CD4-positive, alpha-beta T cell (primary cell): ENCODE measurements at regions of chr6 and their contacts with region 1.

Region 1: DNA sequence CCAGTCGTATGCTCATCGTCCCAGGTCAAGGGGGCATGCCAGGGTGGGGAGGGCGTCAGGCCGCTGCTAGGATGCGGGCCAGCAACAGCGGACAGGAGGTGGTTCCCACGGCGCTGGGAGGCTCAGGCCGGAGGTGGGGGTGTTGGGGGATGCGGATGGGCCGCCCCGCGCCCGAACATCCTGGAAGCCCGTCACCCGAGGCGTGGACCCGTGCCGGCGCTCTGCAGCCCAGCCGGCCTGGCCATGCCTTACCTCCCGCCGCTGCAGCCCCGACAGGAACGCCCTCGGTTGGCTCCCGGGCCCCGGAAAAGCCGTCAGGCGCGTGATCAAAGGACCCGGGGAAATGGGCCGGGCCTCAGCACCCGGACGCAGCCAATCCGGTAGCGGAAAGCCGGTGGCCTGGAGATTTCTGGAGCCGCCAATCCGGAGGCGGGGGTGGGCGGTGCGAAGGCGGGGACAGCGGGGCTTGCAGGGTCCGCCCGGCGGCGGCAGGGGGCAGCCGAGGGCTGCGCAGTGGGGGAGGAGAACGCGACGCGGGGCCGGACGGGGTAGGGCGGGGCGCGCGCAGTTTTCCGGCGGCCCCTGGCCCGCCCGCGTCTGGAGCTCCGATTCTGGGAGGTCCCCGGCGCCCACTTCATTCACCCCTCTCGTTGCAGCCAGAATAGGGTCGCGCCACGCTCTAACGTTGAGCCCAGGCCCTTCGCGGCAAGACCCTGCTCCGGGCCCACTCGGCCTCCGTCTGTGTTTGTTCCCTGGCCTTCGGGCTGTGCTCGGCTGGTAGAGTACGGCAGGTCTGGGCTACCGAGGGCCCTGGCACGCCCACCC is at the start of gene SMIM29:
- DNase-seq: peak; percentile 94 to 99 (median 97)
- ATAC-seq: peak; percentile 90
- H3K4me3 ChIP-seq: peak within 1 kb of the TSS; percentile 96
- H3K4me3 Mint-ChIP-seq: peak within 1 kb of the TSS; percentile 97
- H3K27ac ChIP-seq: peak within 1 kb of the TSS; percentile 89 to 96
- H3K27ac Mint-ChIP-seq: peak within 1 kb of the TSS; percentile 91
- H3K4me1 ChIP-seq: peaks cover 44% of the 10 kb centered on the region
- H3K4me1 Mint-ChIP-seq: peaks cover 28% of the 10 kb centered on the region
- H3K27me3 ChIP-seq: no peaks in the 10 kb centered on the region
- H3K27me3 Mint-ChIP-seq: no peaks in the 10 kb centered on the region
- CTCF ChIP-seq: peak; percentile 89
- total RNA-seq, gene SMIM29: 22.0 to 23.9 TPM

Region 2: DNA sequence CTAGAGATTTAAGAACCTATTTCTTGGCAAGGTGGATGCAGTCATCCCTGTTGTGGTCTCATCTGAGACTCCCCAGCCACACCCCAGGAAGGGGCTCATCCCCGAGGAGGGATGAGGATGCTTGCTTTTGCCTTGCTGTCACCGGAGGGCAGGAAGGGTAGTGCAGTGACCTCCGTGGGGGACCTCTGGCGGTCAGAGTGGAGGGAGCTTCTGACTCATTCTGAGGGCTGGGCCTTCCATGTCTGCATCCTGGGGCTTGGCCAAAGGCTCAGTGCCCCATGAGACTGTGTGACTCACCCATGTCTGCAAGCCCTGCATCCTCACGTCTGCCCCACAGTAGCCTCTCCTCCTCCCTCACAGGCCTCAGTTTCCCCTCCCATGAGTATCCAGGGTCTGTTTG is 576.1 kb before region 1 on chr6:
- CTCF ChIA-PET with region 1: no interaction called
- POLR2A ChIA-PET with region 1: no interaction called
- intact Hi-C with region 1: no loop called
- DNase-seq: no peak
- ATAC-seq: no peak
- H3K4me3 ChIP-seq: no peak overlapping the region
- H3K4me3 Mint-ChIP-seq: no peak overlapping the region
- H3K27ac ChIP-seq: no peak overlapping the region
- H3K27ac Mint-ChIP-seq: no peak overlapping the region
- H3K4me1 ChIP-seq: peaks cover 19% of the 10 kb centered on the region
- H3K4me1 Mint-ChIP-seq: peaks cover 14% of the 10 kb centered on the region
- H3K27me3 ChIP-seq: no peaks in the 10 kb centered on the region
- H3K27me3 Mint-ChIP-seq: no peaks in the 10 kb centered on the region
- CTCF ChIP-seq: no peak

Region 3: GRCh38 chr6:33788694-33789549 is 460.0 kb before region 1 on chr6 and contains the start of gene LEMD2:
- CTCF ChIA-PET with region 1: no interaction called
- POLR2A ChIA-PET with region 1: interaction called, 4 read pairs
- intact Hi-C with region 1: loop called in 1 of 2 experiments (anchors 5 kb)
- DNase-seq: peak; percentile 81 to 96 (median 92)
- ATAC-seq: peak; percentile 88
- H3K4me3 ChIP-seq: peak within 1 kb of the TSS; percentile 53
- H3K4me3 Mint-ChIP-seq: peak within 1 kb of the TSS; percentile 94
- H3K27ac ChIP-seq: peak within 1 kb of the TSS; percentile 50 to 87
- H3K27ac Mint-ChIP-seq: peak within 1 kb of the TSS; percentile 94
- H3K4me1 ChIP-seq: peaks cover 45% of the 10 kb centered on the region
- H3K4me1 Mint-ChIP-seq: peaks cover 47% of the 10 kb centered on the region
- H3K27me3 ChIP-seq: no peaks in the 10 kb centered on the region
- H3K27me3 Mint-ChIP-seq: no peaks in the 10 kb centered on the region
- CTCF ChIP-seq: no peak
- total RNA-seq, gene LEMD2: 122 to 124 TPM

Region 4: DNA sequence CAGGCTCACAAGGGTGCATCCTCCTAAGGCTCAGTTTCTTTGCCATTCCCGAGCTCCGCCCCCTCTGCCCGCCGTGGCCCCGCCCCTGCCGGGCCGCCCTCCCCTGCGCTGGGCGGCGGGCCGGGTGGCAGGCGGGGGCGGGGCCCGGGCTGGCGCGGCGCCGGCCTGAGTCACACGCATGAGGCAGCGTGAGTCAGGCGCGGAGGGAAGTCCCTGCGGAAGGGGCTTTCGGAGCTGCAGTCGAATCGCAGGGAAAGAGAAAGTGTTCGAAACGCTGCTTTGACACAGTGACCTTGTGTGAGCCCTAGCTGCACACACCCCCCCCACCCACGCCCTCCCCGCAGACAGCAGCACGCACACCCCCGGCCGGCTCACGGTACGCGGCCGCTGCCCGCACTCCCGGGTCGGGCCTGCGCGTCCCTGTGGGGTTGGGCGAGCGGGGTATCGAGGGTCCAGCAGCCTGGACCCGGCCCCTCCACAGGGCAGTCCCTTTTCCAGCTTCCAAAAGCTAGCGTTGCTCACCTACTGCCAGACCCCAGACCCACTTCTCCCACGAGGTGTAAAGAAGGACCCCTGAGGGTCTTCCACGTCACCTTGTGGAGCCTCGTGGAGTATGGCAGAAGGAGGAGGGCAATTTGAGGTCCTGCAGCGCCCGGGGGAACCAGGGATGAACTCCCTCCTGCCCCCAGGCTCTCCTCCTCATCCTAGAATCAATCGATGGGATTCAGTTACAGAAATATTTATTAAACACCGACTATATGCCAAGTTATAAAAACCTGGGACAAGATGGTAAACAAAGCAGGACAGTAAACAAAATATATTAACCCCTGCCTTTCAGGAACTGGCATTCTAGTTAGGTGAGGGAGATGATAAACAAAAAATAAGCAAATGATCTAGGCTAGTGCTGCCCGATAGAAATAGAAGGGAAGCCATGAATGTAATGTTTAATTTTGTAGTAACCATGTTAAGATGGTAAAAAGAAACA is 24.7 kb before region 1 on chr6:
- CTCF ChIA-PET with region 1: interaction called, 23 read pairs
- POLR2A ChIA-PET with region 1: interaction called, 32 read pairs
- intact Hi-C with region 1: loop called in 1 of 2 experiments (anchors 1 kb)
- DNase-seq: peak; percentile 87 to 99 (median 93)
- ATAC-seq: peak; percentile 95
- H3K4me3 ChIP-seq: peak overlapping the region; percentile 62
- H3K4me3 Mint-ChIP-seq: peak overlapping the region; percentile 63
- H3K27ac ChIP-seq: peak overlapping the region; percentile 89 to 99
- H3K27ac Mint-ChIP-seq: peak overlapping the region; percentile 75
- H3K4me1 ChIP-seq: peaks cover 20% of the 10 kb centered on the region
- H3K4me1 Mint-ChIP-seq: peaks cover 6% of the 10 kb centered on the region
- H3K27me3 ChIP-seq: no peaks in the 10 kb centered on the region
- H3K27me3 Mint-ChIP-seq: no peaks in the 10 kb centered on the region
- CTCF ChIP-seq: no peak

Region 5: GRCh38 chr6:34392497-34393190 is 143.7 kb after region 1 on chr6 and contains the start of gene NUDT3:
- CTCF ChIA-PET with region 1: interaction called, 13 read pairs
- POLR2A ChIA-PET with region 1: interaction called, 33 read pairs
- intact Hi-C with region 1: loop called (anchors 1 to 2 kb)
- DNase-seq: peak; percentile 86 to 98 (median 92)
- ATAC-seq: peak; percentile 87
- H3K4me3 ChIP-seq: peak within 1 kb of the TSS; percentile 83
- H3K4me3 Mint-ChIP-seq: peak within 1 kb of the TSS; percentile 96
- H3K27ac ChIP-seq: peak within 1 kb of the TSS; percentile 41 to 87
- H3K27ac Mint-ChIP-seq: no peak within 1 kb of the TSS
- H3K4me1 ChIP-seq: peaks cover 29% of the 10 kb centered on the region
- H3K4me1 Mint-ChIP-seq: peaks cover 31% of the 10 kb centered on the region
- H3K27me3 ChIP-seq: no peaks in the 10 kb centered on the region
- H3K27me3 Mint-ChIP-seq: no peaks in the 10 kb centered on the region
- CTCF ChIP-seq: peak; percentile 89
- total RNA-seq, gene NUDT3: 14.8 to 15.0 TPM

Region 6: GRCh38 chr6:34425498-34426410 is 176.8 kb after region 1 on chr6 and contains the start of gene RPS10:
- CTCF ChIA-PET with region 1: interaction called, 5 read pairs
- POLR2A ChIA-PET with region 1: interaction called, 3 read pairs
- intact Hi-C with region 1: loop called in 1 of 2 experiments (anchors 1 kb)
- DNase-seq: peak; percentile 81 to 96 (median 88)
- ATAC-seq: peak; percentile 97
- H3K4me3 ChIP-seq: peak within 1 kb of the TSS; percentile 75
- H3K4me3 Mint-ChIP-seq: peak within 1 kb of the TSS; percentile 99
- H3K27ac ChIP-seq: peak within 1 kb of the TSS; percentile 73 to 74
- H3K27ac Mint-ChIP-seq: peak within 1 kb of the TSS; percentile 97
- H3K4me1 ChIP-seq: peaks cover 37% of the 10 kb centered on the region
- H3K4me1 Mint-ChIP-seq: peaks cover 39% of the 10 kb centered on the region
- H3K27me3 ChIP-seq: no peaks in the 10 kb centered on the region
- H3K27me3 Mint-ChIP-seq: no peaks in the 10 kb centered on the region
- CTCF ChIP-seq: no peak
- total RNA-seq, gene RPS10: 3,088 to 3,122 TPM

Region 7: GRCh38 chr6:34610819-34611477 is 362.0 kb after region 1 on chr6:
- CTCF ChIA-PET with region 1: interaction called, 7 read pairs
- POLR2A ChIA-PET with region 1: interaction called, 4 read pairs
- intact Hi-C with region 1: loop called (anchors 1 to 2 kb)
- DNase-seq: no peak
- ATAC-seq: no peak
- H3K4me3 ChIP-seq: no peak overlapping the region
- H3K4me3 Mint-ChIP-seq: no peak overlapping the region
- H3K27ac ChIP-seq: no peak overlapping the region
- H3K27ac Mint-ChIP-seq: no peak overlapping the region
- H3K4me1 ChIP-seq: peaks cover 2% of the 10 kb centered on the region
- H3K4me1 Mint-ChIP-seq: peaks cover 23% of the 10 kb centered on the region
- H3K27me3 ChIP-seq: no peaks in the 10 kb centered on the region
- H3K27me3 Mint-ChIP-seq: no peaks in the 10 kb centered on the region
- CTCF ChIP-seq: no peak

Region 8: DNA sequence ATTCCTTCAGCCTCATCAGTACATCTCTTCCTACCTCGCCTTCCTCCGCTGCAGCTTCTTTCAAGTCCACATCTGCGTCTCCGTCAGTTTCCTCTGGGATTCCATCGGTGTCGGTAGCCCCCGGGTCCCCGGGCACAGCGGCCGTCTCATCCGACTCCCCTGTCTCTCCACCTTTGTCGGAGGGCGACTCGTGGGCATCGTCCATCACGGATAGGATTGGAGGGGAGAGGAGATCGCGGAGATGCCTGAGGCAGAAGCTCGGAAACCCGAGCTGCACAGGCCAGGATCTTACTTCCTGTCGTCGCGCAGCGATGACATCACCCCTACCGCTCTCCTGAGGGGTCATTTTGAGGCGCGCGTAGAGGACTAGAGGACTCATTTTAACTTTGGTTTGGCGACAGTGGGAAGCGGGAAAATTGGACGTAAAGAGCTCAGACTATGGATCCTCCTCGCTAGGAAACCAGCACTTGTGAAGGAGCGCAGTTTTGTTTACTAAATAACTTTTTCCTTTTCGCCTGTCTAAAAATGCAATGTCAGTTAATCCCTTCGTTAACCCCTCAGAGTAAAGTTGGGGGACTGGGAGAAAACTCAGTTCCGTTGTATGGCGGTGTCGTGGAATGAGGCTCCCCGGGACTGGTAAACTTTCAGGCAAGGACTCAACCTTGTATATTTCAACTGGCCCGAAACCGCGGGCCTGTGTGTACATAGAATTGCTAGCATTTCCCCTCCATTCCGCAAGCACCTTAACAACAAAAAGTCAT is 639.0 kb after region 1 on chr6 and contains the start of gene TAF11:
- CTCF ChIA-PET with region 1: no interaction called
- POLR2A ChIA-PET with region 1: interaction called, 4 read pairs
- intact Hi-C with region 1: loop called in 1 of 2 experiments (anchors 5 kb)
- DNase-seq: peak; percentile 78 to 96 (median 87)
- ATAC-seq: peak; percentile 69
- H3K4me3 ChIP-seq: peak within 1 kb of the TSS; percentile 98
- H3K4me3 Mint-ChIP-seq: peak within 1 kb of the TSS; percentile 97
- H3K27ac ChIP-seq: peak within 1 kb of the TSS; percentile 90 to 93
- H3K27ac Mint-ChIP-seq: peak within 1 kb of the TSS; percentile 97
- H3K4me1 ChIP-seq: peaks cover 36% of the 10 kb centered on the region
- H3K4me1 Mint-ChIP-seq: peaks cover 62% of the 10 kb centered on the region
- H3K27me3 ChIP-seq: no peaks in the 10 kb centered on the region
- H3K27me3 Mint-ChIP-seq: no peaks in the 10 kb centered on the region
- CTCF ChIP-seq: no peak
- total RNA-seq, gene TAF11: 31.5 to 38.1 TPM